CD8-positive, alpha-beta memory T cell (primary cell): ENCODE measurements at regions of chr9 and their contacts with region 1.

Region 1: GRCh38 chr9:127970401-127971313 is 10.1 kb downstream of the EEIG1 start:
- DNase-seq: peak; percentile 36 to 84 (median 75)
- H3K4me3 ChIP-seq: peak overlapping the region; percentile 70
- H3K4me3 Mint-ChIP-seq: peak overlapping the region; percentile 85 to 99 (median 95)
- H3K27ac ChIP-seq: peak overlapping the region; percentile 55
- H3K27ac Mint-ChIP-seq: peak overlapping the region; percentile 87 to 100 (median 98)
- H3K4me1 ChIP-seq: peaks cover 99% of the 10 kb centered on the region
- H3K4me1 Mint-ChIP-seq: peaks cover 95 to 100% (median 100%) of the 10 kb centered on the region in 3 donors
- H3K27me3 ChIP-seq: no peaks in the 10 kb centered on the region
- H3K27me3 Mint-ChIP-seq: peaks cover 0 to 2% of the 10 kb centered on the region in 2 donors

Region 2: DNA sequence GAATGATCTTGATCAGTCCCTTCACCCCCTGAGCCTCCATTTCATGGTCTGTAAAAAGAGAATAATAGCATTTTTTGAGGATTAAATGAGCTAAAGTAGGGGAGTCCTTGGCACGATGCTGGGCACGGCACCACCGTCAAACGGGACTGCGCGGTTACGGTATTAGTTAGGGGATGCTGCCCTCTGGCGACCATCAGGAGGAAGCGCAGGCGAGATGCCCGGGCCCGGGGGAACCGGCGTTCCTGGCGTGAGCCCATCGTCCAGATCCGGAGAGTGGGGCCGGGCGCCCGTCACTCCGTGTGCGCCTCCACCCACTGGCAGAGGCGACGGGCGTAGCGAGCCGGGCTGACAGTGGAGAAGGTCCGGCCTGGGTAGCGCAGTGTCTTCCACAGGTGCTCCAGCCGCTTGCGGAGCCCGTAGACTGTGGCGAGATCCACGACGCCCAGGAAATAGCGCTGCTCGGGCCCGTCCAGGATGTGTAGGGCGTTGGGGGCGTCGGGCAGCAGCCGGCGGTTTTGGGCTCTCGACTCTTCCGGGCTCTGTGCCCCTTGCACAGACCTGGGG is 49.0 kb before region 1 on chr9:
- CTCF ChIA-PET with region 1: no interaction called
- POLR2A ChIA-PET with region 1: no interaction called
- DNase-seq: peak; percentile 68 to 81 (median 75)
- H3K4me3 ChIP-seq: peak overlapping the region; percentile 17
- H3K4me3 Mint-ChIP-seq: peak overlapping the region in 6 of 7 donors; percentile 11 to 62 (median 33)
- H3K27ac ChIP-seq: no peak overlapping the region
- H3K27ac Mint-ChIP-seq: peak overlapping the region in 6 of 8 donors; percentile 23 to 60 (median 52)
- H3K4me1 ChIP-seq: peaks cover 42% of the 10 kb centered on the region
- H3K4me1 Mint-ChIP-seq: peaks cover 25 to 40% (median 28%) of the 10 kb centered on the region in 3 donors
- H3K27me3 ChIP-seq: no peaks in the 10 kb centered on the region
- H3K27me3 Mint-ChIP-seq: peaks cover 0 to 4% of the 10 kb centered on the region in 2 donors

Region 3: DNA sequence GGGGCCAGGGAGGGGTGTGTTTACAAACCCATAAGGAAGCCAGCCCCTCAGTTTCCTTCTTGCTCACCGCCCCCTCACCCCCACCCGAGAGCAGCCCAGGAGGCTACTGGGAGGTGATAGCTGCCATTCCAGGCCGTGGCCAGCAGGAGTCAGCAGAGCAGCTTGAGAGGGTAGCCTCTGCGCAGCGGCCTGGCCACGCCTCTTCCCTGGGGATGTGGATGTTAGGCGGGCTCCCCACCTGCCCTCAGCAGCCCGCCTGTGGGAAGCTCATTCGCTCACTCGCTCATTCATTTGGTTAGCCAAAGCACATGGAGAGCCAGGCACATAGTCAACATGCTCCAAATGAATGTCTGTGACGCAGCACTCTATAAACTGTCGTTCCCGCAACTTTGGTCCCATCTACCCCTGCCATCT is 26.9 kb before region 1 on chr9:
- CTCF ChIA-PET with region 1: interaction called, 21 read pairs
- POLR2A ChIA-PET with region 1: interaction called, 5 read pairs
- DNase-seq: peak; percentile 62 to 82 (median 66)
- H3K4me3 ChIP-seq: no peak overlapping the region
- H3K4me3 Mint-ChIP-seq: peak overlapping the region in 3 of 7 donors; percentile 17 to 36 (median 18)
- H3K27ac ChIP-seq: no peak overlapping the region
- H3K27ac Mint-ChIP-seq: peak overlapping the region in 7 of 8 donors; percentile 30 to 83 (median 66)
- H3K4me1 ChIP-seq: peaks cover 32% of the 10 kb centered on the region
- H3K4me1 Mint-ChIP-seq: peaks cover 15 to 36% (median 21%) of the 10 kb centered on the region in 3 donors
- H3K27me3 ChIP-seq: no peaks in the 10 kb centered on the region
- H3K27me3 Mint-ChIP-seq: no peaks in the 10 kb centered on the region

Region 4: DNA sequence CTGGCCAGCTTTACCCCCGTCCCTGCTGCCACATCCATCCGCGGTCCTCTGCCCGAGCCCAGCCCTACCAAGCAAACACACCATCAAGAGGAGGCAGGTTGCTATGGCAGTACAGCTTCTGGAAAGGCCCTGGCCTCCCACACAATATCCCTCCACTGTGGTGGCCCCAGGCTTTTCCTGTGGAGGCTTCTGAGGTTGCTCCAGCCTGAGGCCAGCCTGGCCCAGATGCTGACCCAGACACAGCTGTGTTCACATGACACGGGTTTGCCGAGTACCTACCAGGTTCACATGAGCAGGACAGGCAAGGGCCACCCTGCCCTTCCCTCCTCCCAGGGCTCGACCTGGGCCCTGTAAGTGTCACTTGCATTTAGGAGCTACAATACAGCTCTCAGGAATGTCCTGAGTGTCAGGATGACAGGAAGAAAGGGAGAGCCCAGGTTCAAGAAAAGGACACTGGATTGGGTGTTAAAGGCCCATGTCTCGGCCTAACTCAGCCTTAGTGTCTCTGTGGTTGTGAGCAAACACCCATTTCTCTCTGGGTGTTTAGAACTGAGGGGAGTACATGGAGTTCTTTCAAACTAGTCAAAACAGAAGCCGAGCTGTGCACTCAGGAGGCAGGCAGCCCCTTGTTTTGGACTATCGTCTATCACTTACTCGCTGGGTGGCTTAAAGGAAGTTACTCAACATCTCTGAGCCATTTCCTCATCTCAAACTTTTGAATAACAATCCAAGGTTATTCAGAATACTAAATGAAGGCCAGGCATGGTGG is 56.3 kb after region 1 on chr9:
- CTCF ChIA-PET with region 1: interaction called, 485 read pairs
- POLR2A ChIA-PET with region 1: interaction called, 30 read pairs
- DNase-seq: peak; percentile 31 to 74 (median 66)
- H3K4me3 ChIP-seq: peak overlapping the region; percentile 60
- H3K4me3 Mint-ChIP-seq: peak overlapping the region; percentile 72 to 90 (median 80)
- H3K27ac ChIP-seq: peak overlapping the region; percentile 84
- H3K27ac Mint-ChIP-seq: peak overlapping the region; percentile 96 to 99 (median 98)
- H3K4me1 ChIP-seq: peaks cover 93% of the 10 kb centered on the region
- H3K4me1 Mint-ChIP-seq: peaks cover 84 to 96% (median 89%) of the 10 kb centered on the region in 3 donors
- H3K27me3 ChIP-seq: no peaks in the 10 kb centered on the region
- H3K27me3 Mint-ChIP-seq: no peaks in the 10 kb centered on the region